ENCODE measurements at regions of chr10 and their contacts with region 1.

Region 1: GRCh38 chr10:72812753-72813430 is 80.6 kb upstream of the OIT3 start:
- DNase-seq: peak; percentile 99
- ATAC-seq: peak; percentile 88
- H3K4me3 ChIP-seq: peak overlapping the region; percentile 4; the same call in 1 of the 2 replicates
- H3K27ac ChIP-seq: peak overlapping the region; percentile 2
- H3K4me1 ChIP-seq: peaks cover 33% of the 10 kb centered on the region
- H3K27me3 ChIP-seq: no peaks in the 10 kb centered on the region
- CTCF ChIP-seq: no peak

Region 2: DNA sequence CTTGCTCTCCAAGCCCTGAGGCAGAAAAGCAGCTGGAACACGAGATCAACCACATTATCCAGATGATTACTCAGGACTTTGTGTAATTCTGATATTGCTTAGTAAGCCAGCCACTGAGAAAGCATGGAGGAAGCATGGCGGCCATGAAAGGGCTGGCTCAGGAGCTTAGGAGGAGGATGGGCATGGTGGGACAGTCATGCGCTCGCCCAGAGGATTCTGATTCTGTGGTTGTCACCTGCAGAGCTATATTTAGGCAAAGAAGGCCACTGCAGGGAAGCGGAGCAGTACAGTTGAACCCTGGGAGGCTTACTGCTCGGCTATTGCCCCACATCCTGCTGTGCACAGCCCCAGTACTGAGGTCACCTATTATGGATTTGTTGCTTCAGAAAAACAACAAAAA is 329.4 kb before region 1 on chr10:
- CTCF ChIA-PET with region 1: no interaction called
- POLR2A ChIA-PET with region 1: interaction called, 16 read pairs
- intact Hi-C with region 1: no loop called
- DNase-seq: no peak
- ATAC-seq: no peak
- H3K4me3 ChIP-seq: no peak overlapping the region
- H3K27ac ChIP-seq: no peak overlapping the region
- H3K4me1 ChIP-seq: no peaks in the 10 kb centered on the region
- H3K27me3 ChIP-seq: no peaks in the 10 kb centered on the region
- CTCF ChIP-seq: no peak

Region 3: DNA sequence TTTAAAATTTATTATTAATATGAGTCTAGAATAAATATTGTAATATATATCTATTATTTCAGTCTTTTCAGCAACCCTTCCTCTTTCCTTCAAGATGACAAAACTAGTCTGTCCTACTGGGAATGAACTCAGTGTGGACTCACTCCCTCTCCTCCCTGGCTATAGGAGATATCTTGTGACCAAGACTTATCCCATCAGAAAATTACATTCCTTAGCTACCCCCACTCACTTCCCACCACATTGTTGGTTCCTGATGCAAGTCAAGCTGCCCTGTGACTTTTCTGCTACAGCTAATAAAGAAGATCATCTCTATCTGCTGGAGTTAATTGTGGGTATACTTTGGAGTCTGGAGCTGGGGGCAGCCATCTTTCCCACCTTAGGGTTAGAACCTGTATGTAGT is 148.9 kb before region 1 on chr10:
- CTCF ChIA-PET with region 1: no interaction called
- POLR2A ChIA-PET with region 1: interaction called, 10 read pairs
- intact Hi-C with region 1: no loop called
- DNase-seq: no peak
- ATAC-seq: no peak
- H3K4me3 ChIP-seq: no peak overlapping the region
- H3K27ac ChIP-seq: no peak overlapping the region
- H3K4me1 ChIP-seq: peaks cover 9% of the 10 kb centered on the region; the same call in 1 of the 2 replicates
- H3K27me3 ChIP-seq: no peaks in the 10 kb centered on the region
- CTCF ChIP-seq: no peak

Region 4: DNA sequence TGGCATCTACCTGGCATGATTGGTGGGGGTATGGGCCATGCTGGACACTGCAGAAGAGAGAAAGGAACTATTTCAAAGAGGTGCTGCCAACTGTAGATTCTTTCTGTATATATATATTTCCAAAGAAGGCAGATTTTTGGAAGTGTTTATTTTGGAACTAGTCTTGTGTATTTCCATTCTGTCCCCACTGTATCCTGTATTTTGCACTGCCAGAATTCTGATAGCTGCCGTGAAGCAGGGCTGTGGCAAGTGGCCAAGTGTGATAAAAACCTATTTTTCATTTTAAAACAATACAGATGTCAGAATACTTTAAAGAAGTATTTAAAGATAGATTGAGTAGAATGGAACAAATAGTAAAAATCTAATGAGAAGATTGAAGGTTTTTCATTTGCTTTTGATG is 103.9 kb before region 1 on chr10:
- CTCF ChIA-PET with region 1: no interaction called
- POLR2A ChIA-PET with region 1: no interaction called
- intact Hi-C with region 1: no loop called
- DNase-seq: no peak
- ATAC-seq: no peak
- H3K4me3 ChIP-seq: no peak overlapping the region
- H3K27ac ChIP-seq: no peak overlapping the region
- H3K4me1 ChIP-seq: no peaks in the 10 kb centered on the region
- H3K27me3 ChIP-seq: no peaks in the 10 kb centered on the region
- CTCF ChIP-seq: no peak

Region 5: GRCh38 chr10:72862957-72863356 is 50.1 kb after region 1 on chr10:
- CTCF ChIA-PET with region 1: no interaction called
- POLR2A ChIA-PET with region 1: interaction called, 12 read pairs
- intact Hi-C with region 1: no loop called
- DNase-seq: no peak
- ATAC-seq: no peak
- H3K4me3 ChIP-seq: no peak overlapping the region
- H3K27ac ChIP-seq: no peak overlapping the region
- H3K4me1 ChIP-seq: no peaks in the 10 kb centered on the region
- H3K27me3 ChIP-seq: peaks cover 32% of the 10 kb centered on the region
- CTCF ChIP-seq: no peak

Region 6: GRCh38 chr10:73467206-73467605 is 654.3 kb after region 1 on chr10:
- CTCF ChIA-PET with region 1: no interaction called
- POLR2A ChIA-PET with region 1: interaction called, 13 read pairs
- intact Hi-C with region 1: no loop called
- DNase-seq: no peak
- ATAC-seq: no peak
- H3K4me3 ChIP-seq: no peak overlapping the region
- H3K27ac ChIP-seq: no peak overlapping the region
- H3K4me1 ChIP-seq: no peaks in the 10 kb centered on the region
- H3K27me3 ChIP-seq: no peaks in the 10 kb centered on the region
- CTCF ChIP-seq: no peak